ENCODE measurements at regions of chr19 and their contacts with region 1.

Region 1: GRCh38 chr19:40822161-40822560 is 23.2 kb downstream of the EGLN2 start:
- DNase-seq: no peak
- ATAC-seq: no peak

Region 2: DNA sequence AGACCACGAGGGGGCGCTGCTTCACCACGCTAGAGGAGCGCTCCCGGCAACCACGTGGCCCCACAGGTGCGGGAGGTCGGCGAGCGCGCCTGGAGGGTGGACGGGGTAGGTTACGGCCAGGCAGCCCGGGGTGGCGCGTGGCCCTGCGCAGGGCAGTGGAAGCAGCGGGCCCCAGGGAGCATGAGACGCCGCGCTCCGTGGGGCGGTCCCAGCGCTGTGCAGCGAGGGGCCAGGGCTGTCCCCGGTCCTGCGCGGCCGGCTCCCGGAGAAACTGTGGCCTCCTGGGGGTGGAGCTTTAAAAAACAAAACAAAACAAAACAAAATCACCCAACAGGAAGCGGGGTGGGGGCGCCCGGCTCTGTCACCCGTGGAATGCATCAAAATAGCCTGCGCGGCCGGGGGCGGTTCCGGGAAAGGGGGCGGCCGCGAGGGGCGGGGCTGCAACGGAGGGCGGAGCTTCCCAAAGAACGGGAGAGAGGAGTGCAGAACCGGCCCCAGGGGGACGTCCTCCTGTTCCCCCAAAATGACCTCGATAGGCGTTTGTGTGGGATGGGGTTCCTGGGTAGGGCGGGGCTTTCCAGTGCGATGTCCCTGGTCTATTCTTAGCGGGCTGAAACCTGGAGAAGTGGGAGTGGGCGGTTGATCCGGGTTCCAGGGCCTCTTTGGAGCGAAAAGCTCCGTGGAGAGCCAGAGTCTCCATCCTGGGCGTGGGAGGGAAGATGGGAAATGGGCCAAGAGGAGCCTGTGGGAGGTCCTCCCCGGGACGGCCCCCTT is 159.1 kb before region 1 on chr19:
- intact Hi-C with region 1: loop called (anchors 5 kb)
- DNase-seq: peak; percentile 95
- ATAC-seq: peak; percentile 90

Region 3: DNA sequence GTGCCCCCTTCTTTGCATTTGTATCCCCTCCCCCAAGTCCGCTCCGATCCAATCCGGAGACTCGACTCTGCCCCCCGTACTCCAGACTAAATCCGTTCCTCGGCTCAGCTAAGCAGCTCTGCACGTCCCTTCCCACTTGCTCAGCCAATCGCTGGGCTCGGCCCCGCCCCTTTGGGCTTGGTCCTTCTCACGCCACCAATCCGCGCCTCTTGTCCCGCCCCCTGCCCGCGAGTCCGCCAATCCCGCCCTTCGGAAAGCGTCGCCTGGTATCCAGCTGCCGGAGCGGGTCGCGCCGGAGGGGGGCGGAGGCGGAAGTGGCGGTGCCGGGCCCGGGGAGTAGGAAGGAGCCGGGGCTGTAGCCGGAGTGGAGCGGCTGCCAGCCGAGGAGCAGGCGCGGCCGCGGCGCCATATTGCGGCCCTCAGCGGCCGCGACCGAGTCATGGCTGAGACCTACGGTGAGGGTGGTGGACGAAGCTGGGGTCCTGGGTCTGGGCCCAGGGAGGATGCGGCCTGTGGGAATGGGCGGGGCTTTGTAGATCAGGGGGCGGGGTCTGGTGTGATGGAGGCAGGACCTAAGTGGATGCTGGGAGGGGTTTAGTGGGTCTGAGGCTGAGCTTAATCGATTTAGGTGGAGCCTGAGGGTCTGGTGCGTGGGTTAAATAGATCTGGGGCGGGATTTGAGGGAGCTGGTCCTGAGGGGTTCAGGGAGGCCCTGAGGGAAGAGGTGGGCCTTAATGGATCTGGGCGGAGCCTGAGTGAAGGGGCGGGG is 44.0 kb before region 1 on chr19 and contains the start of gene RAB4B:
- intact Hi-C with region 1: no loop called
- DNase-seq: peak; percentile 100
- ATAC-seq: peak; percentile 96
- total RNA-seq, gene RAB4B: 12.6 TPM

Measured in Right ventricle myocardium superior (tissue), 1 donor.